ENCODE measurements at regions of chr11 and their contacts with region 1.

Region 1: DNA sequence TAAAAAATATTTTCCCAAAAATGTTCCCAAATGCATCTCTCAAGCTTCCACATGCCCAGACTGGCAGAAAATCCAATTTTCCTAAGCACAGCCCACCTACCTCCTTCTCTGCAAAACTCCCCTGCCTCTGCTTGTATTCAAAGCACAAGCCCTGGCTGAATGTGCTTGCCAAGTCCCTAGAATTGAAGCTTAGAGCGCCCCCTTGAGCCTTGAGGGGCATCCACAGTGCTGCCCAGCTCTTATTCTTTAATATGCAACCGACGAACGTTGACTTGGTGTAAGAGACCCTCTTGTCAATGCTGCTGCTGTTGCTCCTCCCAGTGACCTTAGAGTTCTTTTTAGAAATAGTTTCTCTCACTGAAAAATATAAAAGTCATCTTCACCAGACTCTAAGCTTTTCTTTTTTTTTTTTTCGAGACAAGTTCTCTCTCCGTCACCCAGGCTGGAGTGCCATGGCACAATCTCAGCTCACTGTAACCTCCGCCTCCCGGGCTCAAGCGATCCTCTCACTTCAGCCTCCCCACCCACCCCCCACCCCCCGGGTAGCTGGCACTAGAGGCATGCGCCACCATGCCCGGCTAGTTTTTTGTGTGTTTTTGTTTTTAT is 63.5 kb upstream of the CAPRIN1 start:
- DNase-seq: peak; percentile 89 to 95 (median 95)
- H3K4me3 ChIP-seq: no peak overlapping the region
- H3K27ac ChIP-seq: no peak overlapping the region
- H3K4me1 ChIP-seq: peaks cover 0 to 7% (median 0%) of the 10 kb centered on the region in 4 experiments
- H3K27me3 ChIP-seq: no peaks in the 10 kb centered on the region

Region 2: DNA sequence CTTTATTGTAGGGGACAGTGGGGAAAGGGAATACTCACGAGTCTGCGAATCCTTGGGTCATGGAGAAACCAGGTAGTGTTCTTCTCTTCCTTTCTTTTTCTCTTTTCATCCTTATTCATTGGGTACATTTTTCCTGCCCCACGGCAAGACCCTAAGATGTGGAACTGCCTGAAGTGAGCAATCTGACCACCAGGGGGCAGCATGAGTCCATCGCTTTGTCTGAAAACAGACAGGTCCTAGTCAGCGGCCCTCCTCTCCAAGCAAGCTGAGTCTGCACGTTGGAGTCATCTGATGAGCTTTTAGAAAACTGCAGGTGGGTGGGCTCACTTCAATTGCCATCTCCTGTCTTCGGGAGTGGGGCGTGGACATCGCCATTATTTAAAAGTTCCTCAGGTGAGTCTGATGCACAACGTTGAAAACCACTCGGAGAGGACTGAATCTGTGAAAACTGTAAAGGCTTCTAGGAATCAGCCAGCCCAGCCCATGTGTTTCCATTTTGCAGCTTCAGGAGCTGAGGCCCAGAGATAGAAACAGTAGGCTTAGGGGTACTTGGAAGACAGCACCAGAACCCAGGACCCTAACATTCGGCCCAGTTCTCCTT is 179.8 kb before region 1 on chr11:
- CTCF ChIA-PET with region 1: interaction called, 35 read pairs
- POLR2A ChIA-PET with region 1: no interaction called
- DNase-seq: peak; percentile 85 to 92 (median 86)
- H3K4me3 ChIP-seq: no peak overlapping the region
- H3K27ac ChIP-seq: no peak overlapping the region
- H3K4me1 ChIP-seq: no peaks in the 10 kb centered on the region
- H3K27me3 ChIP-seq: peaks cover 0 to 8% (median 4%) of the 10 kb centered on the region in 5 experiments

Region 3: GRCh38 chr11:33835143-33835878 is 152.8 kb before region 1 on chr11:
- CTCF ChIA-PET with region 1: interaction called, 19 read pairs
- POLR2A ChIA-PET with region 1: no interaction called
- DNase-seq: peak; percentile 36 to 75 (median 69)
- H3K4me3 ChIP-seq: no peak overlapping the region
- H3K27ac ChIP-seq: no peak overlapping the region
- H3K4me1 ChIP-seq: no peaks in the 10 kb centered on the region
- H3K27me3 ChIP-seq: peaks cover 0 to 2% (median 0%) of the 10 kb centered on the region in 5 experiments

Region 4: GRCh38 chr11:33848717-33849390 is 139.2 kb before region 1 on chr11:
- CTCF ChIA-PET with region 1: interaction called, 409 read pairs
- POLR2A ChIA-PET with region 1: no interaction called
- DNase-seq: no peak
- H3K4me3 ChIP-seq: no peak overlapping the region
- H3K27ac ChIP-seq: no peak overlapping the region
- H3K4me1 ChIP-seq: no peaks in the 10 kb centered on the region
- H3K27me3 ChIP-seq: no peaks in the 10 kb centered on the region

Region 5: GRCh38 chr11:33863418-33864172 is 124.5 kb before region 1 on chr11:
- CTCF ChIA-PET with region 1: interaction called, 409 read pairs
- POLR2A ChIA-PET with region 1: no interaction called
- DNase-seq: no peak
- H3K4me3 ChIP-seq: no peak overlapping the region
- H3K27ac ChIP-seq: peak overlapping the region in 1 of 2 experiments; percentile 47
- H3K4me1 ChIP-seq: peaks cover 14 to 80% (median 41%) of the 10 kb centered on the region in 4 experiments
- H3K27me3 ChIP-seq: no peaks in the 10 kb centered on the region

Region 6: GRCh38 chr11:33930317-33931021 is 57.6 kb before region 1 on chr11:
- CTCF ChIA-PET with region 1: interaction called, 10 read pairs
- POLR2A ChIA-PET with region 1: no interaction called
- DNase-seq: peak; percentile 86 to 97 (median 94)
- H3K4me3 ChIP-seq: peak overlapping the region in 4 of 7 experiments; percentile 21 to 57 (median 42)
- H3K27ac ChIP-seq: peak overlapping the region; percentile 91 to 95
- H3K4me1 ChIP-seq: peaks cover 21 to 86% (median 65%) of the 10 kb centered on the region in 4 experiments
- H3K27me3 ChIP-seq: no peaks in the 10 kb centered on the region

Region 7: GRCh38 chr11:33976495-33977199 is 11.4 kb before region 1 on chr11:
- CTCF ChIA-PET with region 1: interaction called, 28 read pairs
- POLR2A ChIA-PET with region 1: no interaction called
- DNase-seq: no peak
- H3K4me3 ChIP-seq: no peak overlapping the region
- H3K27ac ChIP-seq: no peak overlapping the region
- H3K4me1 ChIP-seq: peaks cover 0 to 6% (median 0%) of the 10 kb centered on the region in 4 experiments
- H3K27me3 ChIP-seq: no peaks in the 10 kb centered on the region